Tibial artery (tissue), 4 donors: ENCODE measurements at regions of chr1 and their contacts with region 1.

Region 1: DNA sequence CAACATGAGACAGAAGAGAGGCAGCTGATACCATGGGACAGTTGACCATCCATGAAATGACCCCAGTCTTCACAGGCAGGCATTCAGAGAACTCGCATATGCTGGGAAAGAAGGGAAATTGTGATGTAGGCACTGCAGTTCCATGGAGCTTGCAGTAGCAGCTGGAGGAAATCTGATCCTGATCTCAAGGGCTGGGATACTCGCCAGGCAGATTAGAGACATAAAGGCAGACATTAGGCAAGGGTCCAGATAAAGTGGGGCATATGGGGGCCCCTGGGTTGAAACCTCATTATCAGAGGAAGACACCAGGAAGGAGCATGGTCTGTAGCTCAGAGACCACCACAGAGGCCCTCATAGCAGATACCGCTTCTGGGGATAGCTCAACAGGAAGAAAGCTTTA is 48.7 kb upstream of the TNR start:
- DNase-seq: no peak
- H3K4me3 ChIP-seq: no peak overlapping the region
- H3K27ac ChIP-seq: peak overlapping the region in 1 of 2 donors; percentile 44
- H3K4me1 ChIP-seq: peaks cover 0 to 44% (median 24%) of the 10 kb centered on the region in 4 donors
- H3K27me3 ChIP-seq: no peaks in the 10 kb centered on the region
- CTCF ChIP-seq: no peak

Region 2: DNA sequence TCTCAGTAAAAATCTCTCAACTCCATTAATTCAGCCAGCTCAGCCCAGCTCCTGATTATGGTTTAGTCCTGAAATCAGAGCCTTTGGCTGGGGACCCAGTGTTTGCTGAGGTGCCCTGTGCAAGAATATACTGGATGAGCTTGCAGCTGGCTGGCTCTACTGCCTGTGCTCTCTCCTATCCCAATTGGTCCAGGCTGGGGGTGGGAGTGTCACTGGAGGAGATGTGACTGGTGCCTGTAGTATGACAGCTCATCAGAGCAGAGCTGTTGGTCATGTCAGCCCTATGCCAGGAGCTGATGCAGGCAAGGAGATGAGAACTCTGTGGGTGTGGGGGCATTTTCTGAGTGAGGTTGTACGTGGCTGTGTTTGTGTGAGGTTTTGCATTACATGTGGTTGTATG is 135.7 kb before region 1 on chr1:
- intact Hi-C with region 1: no loop called
- DNase-seq: no peak
- H3K4me3 ChIP-seq: no peak overlapping the region
- H3K27ac ChIP-seq: no peak overlapping the region
- H3K4me1 ChIP-seq: no peaks in the 10 kb centered on the region
- H3K27me3 ChIP-seq: no peaks in the 10 kb centered on the region
- CTCF ChIP-seq: no peak

Region 3: GRCh38 chr1:176866011-176866714 is 1074.0 kb after region 1 on chr1:
- intact Hi-C with region 1: loop called (anchors 5 kb)
- DNase-seq: no peak
- H3K4me3 ChIP-seq: no peak overlapping the region
- H3K27ac ChIP-seq: no peak overlapping the region
- H3K4me1 ChIP-seq: no peaks in the 10 kb centered on the region
- H3K27me3 ChIP-seq: no peaks in the 10 kb centered on the region
- CTCF ChIP-seq: no peak